ENCODE measurements at regions of chr7 and their contacts with region 1.

Region 1: GRCh38 chr7:46369933-46370654 is 449.0 kb upstream of the IGFBP3 start:
- DNase-seq: no peak
- ATAC-seq: no peak
- H3K4me3 ChIP-seq: no peak overlapping the region
- H3K27ac ChIP-seq: no peak overlapping the region
- H3K4me1 ChIP-seq: no peaks in the 10 kb centered on the region
- H3K27me3 ChIP-seq: no peaks in the 10 kb centered on the region
- CTCF ChIP-seq: no peak

Region 2: GRCh38 chr7:46486256-46487206 is 116.4 kb after region 1 on chr7:
- intact Hi-C with region 1: no loop called
- DNase-seq: no peak
- ATAC-seq: peak in 3 of 4 donors; percentile 31 to 49 (median 38)
- H3K4me3 ChIP-seq: no peak overlapping the region
- H3K27ac ChIP-seq: no peak overlapping the region
- H3K4me1 ChIP-seq: no peaks in the 10 kb centered on the region
- H3K27me3 ChIP-seq: no peaks in the 10 kb centered on the region
- CTCF ChIP-seq: no peak

Region 3: DNA sequence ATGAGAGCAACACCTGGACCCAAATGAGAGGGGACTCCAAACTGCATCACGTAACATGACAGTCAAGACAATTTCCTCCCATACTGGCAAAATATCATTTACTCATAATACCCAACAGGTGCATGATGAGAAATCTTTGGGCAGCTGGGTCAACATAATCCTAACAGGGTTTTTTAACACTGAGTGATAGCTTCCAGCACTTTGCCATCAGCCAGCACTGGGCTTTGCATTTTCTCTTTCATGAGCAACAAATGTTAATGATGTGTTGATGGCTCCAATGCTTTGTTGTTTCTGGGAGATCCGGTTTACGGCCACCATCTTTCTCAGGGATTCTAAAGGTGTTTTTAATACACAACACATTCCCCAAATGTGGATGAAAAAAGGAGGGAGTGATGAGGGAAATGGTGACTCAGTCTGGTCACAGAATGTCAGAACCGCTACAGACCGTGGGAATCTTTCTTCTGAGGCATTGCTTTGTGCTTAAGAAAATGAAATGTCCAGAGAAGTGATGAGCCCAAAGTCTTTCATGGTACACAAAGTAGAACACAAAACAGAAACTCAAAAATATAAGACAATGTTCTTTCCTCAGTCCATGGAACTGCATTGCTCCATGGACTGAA is 256.7 kb after region 1 on chr7:
- intact Hi-C with region 1: loop called in 1 of 3 experiments (anchors 5 kb)
- DNase-seq: no peak
- ATAC-seq: no peak
- H3K4me3 ChIP-seq: no peak overlapping the region
- H3K27ac ChIP-seq: no peak overlapping the region
- H3K4me1 ChIP-seq: no peaks in the 10 kb centered on the region
- H3K27me3 ChIP-seq: no peaks in the 10 kb centered on the region
- CTCF ChIP-seq: no peak

Region 4: DNA sequence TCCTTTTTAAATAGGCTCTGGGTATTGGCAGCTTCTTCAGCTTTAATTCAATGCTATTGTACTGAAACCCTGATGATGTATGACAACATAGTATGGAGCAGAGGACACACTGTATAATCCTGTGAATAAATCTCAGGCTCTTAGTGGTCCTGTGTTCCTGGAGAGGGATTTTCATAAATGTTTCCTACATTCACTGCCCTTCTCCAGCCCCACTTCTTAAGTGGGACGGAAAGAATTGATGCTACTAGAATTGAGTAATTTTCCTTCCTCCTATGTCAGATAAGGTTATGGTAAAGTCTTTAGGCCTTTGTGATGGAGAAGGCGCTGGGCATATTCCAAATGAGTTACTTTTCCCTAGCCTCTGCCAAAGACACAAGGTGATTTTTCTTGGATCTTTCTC is 432.4 kb after region 1 on chr7:
- intact Hi-C with region 1: no loop called
- DNase-seq: no peak
- ATAC-seq: no peak
- H3K4me3 ChIP-seq: no peak overlapping the region
- H3K27ac ChIP-seq: no peak overlapping the region
- H3K4me1 ChIP-seq: no peaks in the 10 kb centered on the region
- H3K27me3 ChIP-seq: no peaks in the 10 kb centered on the region
- CTCF ChIP-seq: no peak

Region 5: GRCh38 chr7:46982928-46983327 is 612.8 kb after region 1 on chr7:
- intact Hi-C with region 1: no loop called
- DNase-seq: no peak
- ATAC-seq: no peak
- H3K4me3 ChIP-seq: no peak overlapping the region
- H3K27ac ChIP-seq: no peak overlapping the region
- H3K4me1 ChIP-seq: no peaks in the 10 kb centered on the region
- H3K27me3 ChIP-seq: no peaks in the 10 kb centered on the region
- CTCF ChIP-seq: no peak